Activated naive CD4-positive, alpha-beta T cell treated with anti-CD3 and anti-CD28 coated beads for 36 hours (primary cell): ENCODE measurements at regions of chr2 and their contacts with region 1.

Region 1: GRCh38 chr2:210577263-210578071 is 21.1 kb downstream of the CPS1 start:
- DNase-seq: no peak
- H3K4me3 Mint-ChIP-seq: no peak overlapping the region
- H3K27ac Mint-ChIP-seq: no peak overlapping the region
- H3K4me1 Mint-ChIP-seq: no peaks in the 10 kb centered on the region
- H3K27me3 Mint-ChIP-seq: peaks cover 5% of the 10 kb centered on the region

Region 2: DNA sequence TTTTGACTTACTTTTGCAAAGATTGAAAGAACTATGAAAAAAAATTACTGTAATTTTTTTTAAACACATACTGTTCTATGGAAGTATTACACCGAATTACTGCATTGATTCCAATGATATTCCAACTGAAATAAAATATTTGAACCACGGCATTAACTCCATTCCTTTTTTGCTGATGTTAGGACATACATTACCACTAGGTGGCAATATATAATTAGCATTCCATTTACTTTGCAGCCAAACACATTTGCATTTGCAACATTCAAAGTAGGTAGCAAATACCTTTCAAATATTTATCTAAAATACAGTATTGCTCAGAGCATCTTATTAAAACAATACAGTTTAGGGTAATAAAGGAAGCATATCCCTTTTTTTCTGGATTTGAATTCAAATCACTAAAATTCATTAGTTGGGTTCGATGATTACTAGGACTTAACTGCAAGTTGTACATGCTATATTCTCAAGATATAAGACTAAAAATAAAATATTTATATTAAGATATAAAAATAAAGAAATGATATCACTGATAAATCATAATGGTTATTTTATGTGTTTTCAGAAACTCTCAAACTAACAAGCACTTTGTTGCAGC is 132.3 kb before region 1 on chr2:
- CTCF ChIA-PET with region 1: no interaction called
- intact Hi-C with region 1: loop called (anchors 1 kb)
- DNase-seq: no peak
- H3K4me3 Mint-ChIP-seq: no peak overlapping the region
- H3K27ac Mint-ChIP-seq: no peak overlapping the region
- H3K4me1 Mint-ChIP-seq: peaks cover 4% of the 10 kb centered on the region
- H3K27me3 Mint-ChIP-seq: no peaks in the 10 kb centered on the region

Region 3: GRCh38 chr2:211035548-211036185 is 458.2 kb after region 1 on chr2:
- CTCF ChIA-PET with region 1: no interaction called
- intact Hi-C with region 1: loop called (anchors 1 kb)
- DNase-seq: no peak
- H3K4me3 Mint-ChIP-seq: no peak overlapping the region
- H3K27ac Mint-ChIP-seq: no peak overlapping the region
- H3K4me1 Mint-ChIP-seq: no peaks in the 10 kb centered on the region
- H3K27me3 Mint-ChIP-seq: no peaks in the 10 kb centered on the region

Region 4: DNA sequence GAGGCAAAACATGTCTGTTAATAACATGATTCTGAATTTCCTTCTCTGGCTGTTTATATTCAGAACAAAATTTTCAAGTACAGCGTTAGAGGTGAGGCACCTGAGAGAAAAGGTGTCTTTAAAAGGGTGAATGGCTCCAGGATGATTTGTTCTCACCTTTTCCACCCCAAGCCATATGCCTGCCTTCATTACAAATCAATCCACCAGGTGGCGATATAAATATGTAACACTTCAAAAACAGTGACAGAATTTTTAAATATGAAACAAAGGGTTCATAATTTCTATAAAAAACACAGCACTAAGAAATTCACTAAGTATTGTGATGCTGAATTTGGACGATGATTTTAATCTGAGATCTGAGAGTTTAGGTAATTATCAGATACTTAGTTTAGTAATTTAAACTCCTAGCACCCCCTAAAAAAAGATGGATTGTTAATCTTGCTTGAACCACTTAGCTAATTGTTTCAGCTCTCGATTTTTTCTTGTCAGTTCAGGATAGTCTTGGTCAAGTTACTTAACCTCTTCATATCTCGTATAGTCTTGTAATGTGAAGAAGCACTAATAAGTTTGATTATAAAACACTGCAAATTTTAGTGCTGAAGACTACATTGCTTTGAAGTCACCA is 507.7 kb after region 1 on chr2:
- CTCF ChIA-PET with region 1: no interaction called
- intact Hi-C with region 1: loop called (anchors 2 kb)
- DNase-seq: no peak
- H3K4me3 Mint-ChIP-seq: no peak overlapping the region
- H3K27ac Mint-ChIP-seq: no peak overlapping the region
- H3K4me1 Mint-ChIP-seq: no peaks in the 10 kb centered on the region
- H3K27me3 Mint-ChIP-seq: no peaks in the 10 kb centered on the region